Left cardiac atrium (tissue), 4 donors: ENCODE measurements at regions of chr1 and their contacts with region 1.

Region 1: GRCh38 chr1:225474986-225475820 is 47.4 kb upstream of the LBR start:
- DNase-seq: peak; percentile 68
- ATAC-seq: peak; percentile 90 to 93

Region 2: GRCh38 chr1:225772323-225772768 is 297.1 kb after region 1 on chr1:
- intact Hi-C with region 1: loop called (anchors 2 to 5 kb)
- DNase-seq: peak; percentile 88
- ATAC-seq: peak; percentile 77 to 84

Region 3: DNA sequence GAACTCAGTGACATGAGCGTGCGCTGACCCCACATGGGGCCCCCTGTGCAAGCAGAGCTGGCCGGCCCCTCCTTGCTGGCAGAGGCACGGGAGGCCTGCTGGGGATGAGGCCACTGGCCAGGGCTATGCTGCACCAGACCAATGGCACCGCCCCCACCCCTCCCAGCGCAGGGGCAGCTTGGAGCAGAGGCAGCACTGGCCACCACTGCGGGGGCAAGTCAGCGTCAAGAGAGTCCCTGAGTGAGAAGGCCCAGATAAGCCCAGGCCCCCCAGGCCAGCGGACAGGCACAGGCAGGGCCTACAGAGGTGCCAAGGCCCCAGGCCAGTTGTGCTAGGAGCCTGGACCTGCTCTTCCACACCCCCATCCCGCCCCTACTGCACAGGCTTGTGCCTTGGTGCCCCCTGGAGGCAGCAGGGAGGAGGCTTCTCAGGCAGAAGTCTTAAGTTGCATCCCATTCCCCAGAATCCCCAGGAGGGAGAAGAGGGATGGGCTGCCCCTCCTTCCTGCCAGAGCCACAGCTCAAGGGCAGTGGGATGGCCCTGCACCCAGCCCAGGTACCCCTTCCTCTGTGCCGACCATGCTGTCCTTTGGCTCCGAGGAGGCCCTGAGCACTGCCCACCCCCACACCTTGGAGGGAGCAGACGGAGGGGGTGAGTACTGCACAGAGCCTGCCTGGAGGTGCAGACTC is 370.5 kb after region 1 on chr1:
- intact Hi-C with region 1: loop called in 1 of 2 experiments (anchors 10 kb)
- DNase-seq: peak; percentile 86
- ATAC-seq: peak; percentile 74 to 79

Region 4: DNA sequence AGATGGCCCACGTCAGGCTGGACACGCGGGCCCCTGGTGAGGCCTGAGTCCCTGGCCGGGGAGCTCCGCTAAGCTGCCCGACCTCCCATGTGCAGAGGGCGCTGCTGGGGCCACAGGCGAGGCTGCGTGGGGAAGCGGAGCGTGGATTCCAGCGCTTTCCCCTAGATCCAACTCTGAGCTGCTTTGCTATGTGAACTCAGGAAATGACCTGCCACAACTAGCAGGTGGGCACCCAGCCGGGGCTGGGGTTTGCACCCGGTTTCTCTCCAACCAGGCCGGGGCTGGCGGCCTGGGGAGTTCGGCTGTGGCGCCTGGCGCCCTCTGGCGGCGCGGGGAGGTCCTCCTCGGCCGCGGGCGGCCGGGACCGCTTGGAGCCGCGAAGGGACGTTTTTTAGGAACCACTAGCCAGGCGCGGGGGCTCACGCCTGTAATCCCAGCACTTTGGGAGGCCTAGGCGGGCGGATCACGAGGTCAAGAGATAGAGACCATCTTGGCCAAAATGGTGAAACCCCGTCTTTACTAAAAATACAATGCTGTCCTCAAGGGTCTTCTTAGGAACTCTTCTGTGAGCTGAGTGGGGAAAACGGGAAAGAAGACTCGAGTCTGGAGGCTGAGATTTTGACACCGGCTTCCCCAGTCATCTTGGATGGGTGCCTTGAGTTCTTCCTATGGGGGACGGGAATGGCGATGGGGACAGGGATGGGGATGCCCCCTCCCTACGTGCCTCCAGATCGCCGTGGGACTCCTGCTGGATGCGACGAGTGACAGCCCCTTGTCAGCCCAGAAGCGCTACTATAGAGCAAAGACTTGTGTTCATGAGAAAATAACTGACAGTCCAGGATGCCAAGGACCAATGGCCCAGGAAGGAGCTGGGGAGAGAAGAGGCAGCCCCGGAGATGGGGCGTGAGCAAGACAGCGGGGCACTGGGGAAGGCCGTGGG is 436.3 kb after region 1 on chr1:
- intact Hi-C with region 1: loop called (anchors 2 kb)
- DNase-seq: peak; percentile 80
- ATAC-seq: peak; percentile 91 to 95

Region 5: DNA sequence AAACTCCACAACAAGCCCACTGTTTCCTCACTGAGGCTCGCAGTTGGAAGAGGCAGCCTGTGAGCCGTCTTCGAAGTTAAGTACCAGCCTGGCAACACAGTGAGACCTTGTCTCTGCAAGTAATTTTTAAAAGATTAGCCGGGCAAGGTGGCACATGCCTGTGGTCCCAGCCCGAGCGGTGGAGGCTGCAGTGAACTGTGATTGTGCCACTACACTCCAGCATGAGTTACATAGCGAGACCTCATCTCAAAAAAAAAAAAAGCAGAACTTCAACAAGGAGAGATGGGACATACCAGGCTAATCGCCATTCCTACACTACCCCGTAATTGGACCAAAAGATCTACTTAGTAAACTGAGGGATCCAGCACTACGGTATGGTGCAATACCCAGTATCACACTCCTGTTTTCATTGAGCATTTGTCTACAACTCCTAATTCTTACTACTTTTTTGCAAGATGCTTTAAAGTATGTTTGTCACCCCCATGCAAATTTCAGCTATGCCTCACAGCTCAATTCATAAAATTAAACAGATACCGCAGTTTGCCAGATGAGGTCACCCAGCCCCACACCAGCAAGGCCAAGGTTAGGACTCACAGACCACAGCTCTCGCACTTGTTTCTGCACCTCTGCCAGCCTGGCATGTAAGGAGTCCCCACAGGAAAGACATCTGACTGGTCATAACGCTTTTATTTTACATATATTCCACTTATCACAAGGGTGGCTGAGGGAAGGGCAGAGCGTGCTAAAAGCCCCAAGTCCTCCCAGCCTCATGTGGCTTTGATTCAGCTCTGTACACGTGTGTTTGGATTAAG is 502.9 kb after region 1 on chr1:
- intact Hi-C with region 1: loop called (anchors 1 to 5 kb)
- DNase-seq: no peak
- ATAC-seq: no peak